Right cardiac atrium (tissue), 5 donors: ENCODE measurements at regions of chr15 and their contacts with region 1.

Region 1: DNA sequence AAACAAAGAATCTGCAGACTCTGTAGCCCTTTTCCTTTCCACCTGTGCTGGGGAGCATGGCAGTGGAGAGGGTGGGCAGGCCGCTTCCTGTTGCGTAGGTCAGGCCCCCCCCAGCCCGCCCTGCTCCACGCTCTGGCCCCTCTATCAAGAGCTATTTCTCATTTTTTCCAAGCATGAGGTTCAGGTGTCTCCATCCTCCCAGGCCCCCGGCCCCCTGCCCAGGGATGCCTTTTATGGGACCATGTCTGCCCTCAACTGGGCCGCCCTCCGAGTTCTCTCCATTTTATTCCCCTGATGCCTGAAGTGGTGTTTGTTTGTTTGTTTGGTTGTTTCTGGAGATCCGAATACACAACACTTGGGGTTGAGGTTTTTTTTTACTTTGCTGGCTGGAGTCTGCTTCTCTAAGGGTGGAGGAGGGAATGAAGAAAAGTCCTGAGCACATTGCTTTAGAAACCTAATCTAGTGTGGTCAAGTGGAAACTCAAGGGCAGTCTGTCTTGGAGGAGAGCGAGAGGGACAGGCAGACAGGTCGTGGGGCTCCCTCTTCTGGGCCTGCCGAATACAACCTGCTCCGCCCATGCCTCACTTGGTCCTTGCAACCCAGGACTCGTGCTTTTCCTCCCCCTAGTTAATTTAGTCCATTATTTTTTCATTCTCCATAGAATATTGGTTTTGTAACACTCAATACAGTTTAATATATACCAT is 176.5 kb upstream of the LYSMD4 start:
- DNase-seq: peak in 1 of 3 donors; percentile 50
- ATAC-seq: peak; percentile 58 to 78
- H3K4me3 ChIP-seq: no peak overlapping the region
- H3K27ac ChIP-seq: no peak overlapping the region
- H3K4me1 ChIP-seq: no peaks in the 10 kb centered on the region
- H3K27me3 ChIP-seq: no peaks in the 10 kb centered on the region

Region 2: DNA sequence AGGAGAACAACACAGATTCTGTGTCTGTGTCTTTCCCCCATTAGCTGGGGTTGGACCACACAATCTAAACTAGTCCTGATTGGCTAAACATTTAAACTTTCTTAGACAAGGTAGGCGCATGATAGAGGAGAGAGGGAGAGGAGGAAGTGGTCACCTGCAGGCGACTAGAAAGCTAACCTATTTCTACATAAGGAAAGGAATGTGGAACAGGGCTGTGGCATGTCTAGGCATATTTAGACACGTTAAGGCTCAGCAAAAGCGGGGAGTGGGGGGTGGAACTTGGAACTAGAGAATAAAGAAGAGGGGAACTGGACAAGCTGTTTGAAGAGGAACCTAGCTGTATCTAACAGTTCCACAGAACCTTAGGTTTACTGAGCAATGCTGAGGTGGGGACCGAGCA is 645.6 kb before region 1 on chr15:
- intact Hi-C with region 1: loop called in 1 of 4 experiments (anchors 10 kb)
- DNase-seq: no peak
- ATAC-seq: no peak
- H3K4me3 ChIP-seq: no peak overlapping the region
- H3K27ac ChIP-seq: no peak overlapping the region
- H3K4me1 ChIP-seq: no peaks in the 10 kb centered on the region
- H3K27me3 ChIP-seq: no peaks in the 10 kb centered on the region